Gastrocnemius medialis (tissue), 4 donors: ENCODE measurements at regions of chr11 and their contacts with region 1.

Region 1: GRCh38 chr11:85965202-85965601 is 103.7 kb downstream of the PICALM start:
- DNase-seq: no peak
- ATAC-seq: no peak
- H3K4me3 ChIP-seq: no peak overlapping the region
- H3K27ac ChIP-seq: no peak overlapping the region
- H3K4me1 ChIP-seq: peaks cover 39 to 48% of the 10 kb centered on the region in 2 donors
- H3K27me3 ChIP-seq: no peaks in the 10 kb centered on the region
- CTCF ChIP-seq: no peak
- POLR2A ChIP-seq: no peak

Region 2: GRCh38 chr11:85759915-85760314 is 205.3 kb before region 1 on chr11:
- in situ Hi-C with region 1: no loop called
- intact Hi-C with region 1: no loop called
- DNase-seq: no peak
- ATAC-seq: no peak
- H3K4me3 ChIP-seq: no peak overlapping the region
- H3K27ac ChIP-seq: no peak overlapping the region
- H3K4me1 ChIP-seq: no peaks in the 10 kb centered on the region
- H3K27me3 ChIP-seq: no peaks in the 10 kb centered on the region
- CTCF ChIP-seq: no peak
- POLR2A ChIP-seq: no peak

Region 3: GRCh38 chr11:86035164-86035563 is 70.0 kb after region 1 on chr11:
- in situ Hi-C with region 1: no loop called
- intact Hi-C with region 1: loop called (anchors 5 kb)
- DNase-seq: peak; percentile 40 to 61
- ATAC-seq: peak; percentile 82 to 84
- H3K4me3 ChIP-seq: no peak overlapping the region
- H3K27ac ChIP-seq: peak overlapping the region; percentile 57 to 83 (median 74)
- H3K4me1 ChIP-seq: peaks cover 79 to 81% of the 10 kb centered on the region in 2 donors
- H3K27me3 ChIP-seq: no peaks in the 10 kb centered on the region
- CTCF ChIP-seq: no peak
- POLR2A ChIP-seq: no peak

Region 4: DNA sequence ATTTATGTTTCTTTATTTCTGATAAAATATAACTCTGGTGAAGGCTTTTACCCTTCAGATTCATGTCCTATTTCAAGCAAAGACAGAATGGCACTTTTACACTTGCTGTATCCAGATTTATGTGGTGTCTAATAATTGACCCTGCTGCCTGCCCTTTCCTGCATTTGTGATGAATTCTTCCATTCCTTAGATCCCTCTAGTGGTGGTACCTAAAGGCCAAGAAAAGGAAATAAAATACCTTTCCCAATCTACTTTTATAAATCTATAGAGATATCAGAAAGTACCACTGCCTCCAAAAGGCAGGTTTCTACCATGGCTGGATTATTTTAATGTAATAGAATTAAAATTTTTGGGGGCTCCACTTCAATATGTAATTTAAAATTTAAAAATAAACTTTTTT is 443.6 kb after region 1 on chr11:
- in situ Hi-C with region 1: no loop called
- intact Hi-C with region 1: no loop called
- DNase-seq: no peak
- ATAC-seq: no peak
- H3K4me3 ChIP-seq: no peak overlapping the region
- H3K27ac ChIP-seq: no peak overlapping the region
- H3K4me1 ChIP-seq: no peaks in the 10 kb centered on the region
- H3K27me3 ChIP-seq: no peaks in the 10 kb centered on the region
- CTCF ChIP-seq: no peak
- POLR2A ChIP-seq: no peak